Activated CD4-positive, alpha-beta memory T cell treated with anti-CD3 and anti-CD28 coated beads, Interleukin-2, amount 10 ng/mL, durations not matched to agents 7 days and 5 days (primary cell): ENCODE measurements at regions of chr9 and their contacts with region 1.

Region 1: GRCh38 chr9:129584136-129584535 is 36.8 kb downstream of the C9orf50 start:
- DNase-seq: peak; percentile 79
- H3K4me3 Mint-ChIP-seq: no peak overlapping the region
- H3K27ac Mint-ChIP-seq: peak overlapping the region; percentile 73
- H3K4me1 Mint-ChIP-seq: peaks cover 76% of the 10 kb centered on the region
- H3K27me3 Mint-ChIP-seq: peaks cover 11% of the 10 kb centered on the region

Region 2: DNA sequence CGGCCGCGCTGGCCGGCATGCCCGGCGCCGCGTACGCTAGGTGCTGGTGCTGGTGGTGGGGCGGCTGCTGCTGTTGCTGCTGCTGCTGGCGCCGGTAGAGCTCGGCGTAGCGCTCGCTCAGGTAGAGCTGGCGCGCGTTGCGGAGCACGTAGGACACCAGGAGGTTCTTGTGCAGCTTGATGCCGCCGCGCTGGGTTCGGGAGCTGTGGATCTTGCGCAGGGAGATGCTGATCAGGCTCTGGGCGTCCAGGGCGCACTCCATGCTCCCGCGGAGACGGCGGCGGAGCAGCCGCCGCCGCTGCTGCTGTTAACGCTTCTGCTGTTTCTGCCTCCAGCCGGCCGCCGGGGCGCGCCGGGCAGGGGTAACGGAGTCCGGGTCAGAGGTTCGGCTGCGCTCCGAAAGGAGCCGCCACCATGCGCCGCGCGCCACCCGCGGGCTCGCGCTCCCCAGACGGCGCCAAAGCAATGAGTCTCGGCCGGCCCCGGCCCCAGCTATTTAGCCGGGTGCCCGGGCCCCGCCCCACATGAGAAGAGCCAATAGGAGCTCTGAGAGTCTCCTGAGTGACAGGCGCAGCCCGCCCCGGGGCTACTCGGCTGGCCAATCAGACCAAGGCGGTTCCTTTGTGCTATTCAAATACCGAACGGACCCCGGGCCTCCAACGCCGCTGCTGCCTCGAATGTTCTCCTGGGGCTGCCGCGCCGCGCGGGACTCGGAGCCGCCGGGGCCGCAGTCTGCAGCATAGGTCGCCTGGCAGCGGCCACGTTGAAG is 406.2 kb before region 1 on chr9 and contains the start of gene IER5L:
- CTCF ChIA-PET with region 1: interaction called, 10 read pairs
- POLR2A ChIA-PET with region 1: no interaction called
- DNase-seq: peak; percentile 94
- H3K4me3 Mint-ChIP-seq: peak within 1 kb of the TSS; percentile 84
- H3K27ac Mint-ChIP-seq: peak within 1 kb of the TSS; percentile 45
- H3K4me1 Mint-ChIP-seq: peaks cover 15% of the 10 kb centered on the region
- H3K27me3 Mint-ChIP-seq: peaks cover 19% of the 10 kb centered on the region
- total RNA-seq, gene IER5L: 2.4 to 3.0 TPM

Region 3: DNA sequence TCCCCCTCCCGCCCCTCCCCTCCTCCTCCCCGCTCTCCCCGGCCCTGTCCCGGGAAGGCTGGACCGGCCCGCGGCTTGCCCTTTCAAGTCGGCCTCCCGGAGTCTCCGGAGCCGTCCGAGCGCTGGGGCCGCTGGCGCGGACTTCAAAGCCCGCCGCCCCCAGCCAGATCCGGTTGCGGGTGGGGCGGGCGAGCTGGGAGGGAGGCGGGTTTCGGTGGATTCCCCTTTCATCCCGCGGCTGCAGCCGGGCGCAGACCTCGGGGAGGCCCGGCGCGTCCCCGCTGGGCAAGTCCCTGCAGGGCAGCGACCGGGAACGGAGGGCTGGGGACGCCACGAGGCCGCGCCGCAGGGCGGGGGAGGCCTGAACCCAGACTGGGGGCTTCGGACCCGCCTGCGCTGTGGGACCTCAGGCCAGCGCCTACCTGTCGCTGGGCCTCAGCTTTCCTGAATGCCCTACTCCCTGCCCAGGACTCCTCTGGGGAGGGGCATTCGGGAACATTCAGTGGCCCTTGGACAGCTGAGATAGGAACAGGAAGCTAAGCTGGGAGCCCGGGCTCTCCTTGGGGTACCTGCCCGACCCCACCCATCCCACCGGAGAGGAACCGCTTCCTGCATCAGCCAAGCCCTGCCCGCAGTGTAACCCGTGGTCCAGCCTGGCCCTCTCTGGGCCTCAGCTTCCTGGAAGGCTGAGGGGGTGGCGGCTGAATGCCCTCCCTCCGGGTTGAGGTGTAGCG is 13.4 kb after region 1 on chr9:
- CTCF ChIA-PET with region 1: interaction called, 4 read pairs
- POLR2A ChIA-PET with region 1: interaction called, 38 read pairs
- DNase-seq: peak; percentile 64
- H3K4me3 Mint-ChIP-seq: peak overlapping the region; percentile 52
- H3K27ac Mint-ChIP-seq: peak overlapping the region; percentile 12
- H3K4me1 Mint-ChIP-seq: peaks cover 35% of the 10 kb centered on the region
- H3K27me3 Mint-ChIP-seq: peaks cover 30% of the 10 kb centered on the region

Region 4: DNA sequence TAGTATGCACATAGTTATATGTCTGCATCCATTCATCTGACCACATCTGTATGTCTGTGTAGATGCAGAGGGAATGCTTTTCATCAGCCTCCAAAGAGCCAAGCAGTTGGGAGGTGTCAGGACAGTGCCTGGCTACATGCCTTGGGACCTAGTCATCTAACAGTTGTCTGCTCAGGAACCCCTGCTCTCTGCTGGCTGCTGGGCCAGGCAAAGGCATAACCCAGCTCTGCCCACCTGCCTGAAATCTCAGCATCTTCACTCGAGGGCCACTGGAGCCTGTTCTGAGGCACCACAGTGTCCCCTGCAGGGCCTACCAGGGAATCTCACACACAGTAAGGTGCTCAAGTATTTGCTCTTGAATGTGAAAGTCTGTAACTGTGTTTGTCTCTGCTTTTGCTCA is 33.0 kb after region 1 on chr9:
- CTCF ChIA-PET with region 1: no interaction called
- POLR2A ChIA-PET with region 1: no interaction called
- DNase-seq: peak; percentile 41
- H3K4me3 Mint-ChIP-seq: no peak overlapping the region
- H3K27ac Mint-ChIP-seq: no peak overlapping the region
- H3K4me1 Mint-ChIP-seq: peaks cover 7% of the 10 kb centered on the region
- H3K27me3 Mint-ChIP-seq: peaks cover 35% of the 10 kb centered on the region